ENCODE measurements at regions of chr1 and their contacts with region 1.

Region 1: DNA sequence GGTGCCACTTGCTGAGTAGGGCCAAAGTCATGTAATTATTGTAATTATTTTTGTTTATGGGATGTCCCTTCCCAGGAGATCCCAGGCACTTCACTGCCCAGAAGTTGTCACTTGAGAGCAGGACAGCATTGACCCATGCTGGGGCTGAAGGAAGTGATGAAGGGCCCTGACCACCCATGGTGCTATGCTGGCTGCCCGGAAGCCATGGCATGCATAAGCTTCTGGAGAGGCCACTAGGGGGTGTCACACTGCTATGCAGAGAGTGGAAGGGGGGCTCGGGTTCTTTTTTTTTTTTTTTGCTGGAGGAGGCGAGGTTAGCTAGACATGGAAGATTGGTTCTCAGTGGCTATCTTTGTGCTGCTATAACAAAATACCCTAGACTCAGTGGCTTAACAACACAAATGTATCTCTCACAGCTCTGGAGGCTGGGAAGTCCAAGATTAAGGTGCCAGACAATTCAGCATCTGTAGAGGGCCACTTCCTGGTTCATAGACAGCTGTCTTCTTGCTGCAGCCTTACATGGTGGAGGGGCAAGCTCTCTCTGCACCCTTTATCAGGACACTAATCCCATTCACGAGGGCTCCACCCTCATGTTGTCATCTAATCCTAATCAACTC is 84.9 kb downstream of the CNIH3 start:
- H3K4me3 ChIP-seq: no peak overlapping the region
- H3K27ac ChIP-seq: no peak overlapping the region
- H3K4me1 ChIP-seq: no peaks in the 10 kb centered on the region
- CTCF ChIP-seq: peak; percentile 56

Region 2: DNA sequence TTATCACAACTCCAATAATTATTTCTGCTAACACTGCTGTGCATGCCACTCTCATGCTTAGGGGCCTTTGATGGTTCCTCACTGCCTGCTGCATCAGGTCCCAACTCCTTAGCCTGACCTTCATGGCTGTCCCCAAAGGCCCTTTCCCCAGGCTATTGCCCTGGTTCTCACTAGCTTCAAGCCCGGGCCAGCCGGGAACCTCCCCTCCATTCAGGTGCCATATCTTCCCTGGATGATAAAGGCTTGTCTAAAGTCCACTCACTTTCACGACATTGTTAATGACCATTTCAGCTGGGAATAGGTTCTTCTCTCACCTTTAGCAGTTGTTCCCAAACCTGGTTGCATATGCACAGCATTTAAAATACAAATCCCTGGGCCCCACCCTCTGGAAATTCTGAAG is 10.9 kb after region 1 on chr1:
- CTCF ChIA-PET with region 1: interaction called, 14 read pairs
- POLR2A ChIA-PET with region 1: no interaction called
- H3K4me3 ChIP-seq: no peak overlapping the region
- H3K27ac ChIP-seq: no peak overlapping the region
- H3K4me1 ChIP-seq: peaks cover 4% of the 10 kb centered on the region; the same call in 1 of the 2 replicates
- CTCF ChIP-seq: no peak

Region 3: GRCh38 chr1:224774378-224774777 is 73.4 kb after region 1 on chr1:
- CTCF ChIA-PET with region 1: interaction called, 10 read pairs
- POLR2A ChIA-PET with region 1: no interaction called
- H3K4me3 ChIP-seq: no peak overlapping the region
- H3K27ac ChIP-seq: no peak overlapping the region
- H3K4me1 ChIP-seq: peaks cover 4% of the 10 kb centered on the region; the same call in 1 of the 2 replicates
- CTCF ChIP-seq: peak; percentile 50; the same call in 1 of the 2 replicates

Region 4: GRCh38 chr1:224894918-224895317 is 193.9 kb after region 1 on chr1:
- CTCF ChIA-PET with region 1: interaction called, 28 read pairs
- POLR2A ChIA-PET with region 1: no interaction called
- H3K4me3 ChIP-seq: no peak overlapping the region
- H3K27ac ChIP-seq: no peak overlapping the region
- H3K4me1 ChIP-seq: no peaks in the 10 kb centered on the region
- CTCF ChIP-seq: peak; percentile 38; the same call in 1 of the 2 replicates

Region 5: DNA sequence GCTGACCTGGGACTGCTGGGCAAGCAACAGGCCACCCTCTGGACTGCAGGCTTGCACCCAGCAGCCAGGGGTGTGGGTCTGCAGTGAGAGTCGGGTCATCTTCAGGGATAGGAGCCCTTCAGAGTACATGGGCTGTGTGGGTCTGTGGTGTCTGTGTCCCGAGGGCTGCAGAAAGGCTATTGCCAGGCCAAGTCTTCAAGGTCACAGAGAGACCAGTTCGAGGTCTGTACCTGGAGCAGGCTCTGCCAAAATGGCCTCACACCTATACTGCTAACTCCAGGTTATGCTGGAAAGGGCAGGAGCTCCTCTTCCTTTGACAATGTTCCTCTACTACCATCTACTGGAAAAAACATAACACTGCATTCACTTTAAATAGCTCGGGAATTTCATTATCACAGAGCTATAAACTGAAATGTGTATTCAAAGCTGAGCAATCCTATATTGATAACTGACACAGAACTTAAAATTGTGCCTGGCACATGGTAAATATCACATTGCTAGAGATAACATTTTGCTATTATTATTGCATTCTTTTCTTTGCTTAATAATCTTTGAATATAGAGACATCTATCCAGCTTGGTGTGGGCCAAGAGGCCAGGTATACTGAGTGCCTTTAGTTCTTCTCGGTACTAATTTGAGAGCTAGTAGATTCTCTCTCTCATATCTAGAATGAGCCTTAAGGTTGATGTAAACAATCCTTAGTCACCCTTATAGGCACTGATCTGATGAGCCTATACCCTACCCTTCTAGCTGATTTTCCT is 221.6 kb after region 1 on chr1:
- CTCF ChIA-PET with region 1: interaction called, 25 read pairs
- POLR2A ChIA-PET with region 1: no interaction called
- H3K4me3 ChIP-seq: no peak overlapping the region
- H3K27ac ChIP-seq: no peak overlapping the region
- H3K4me1 ChIP-seq: no peaks in the 10 kb centered on the region
- CTCF ChIP-seq: peak; percentile 87